Activated B cell treated with CpG ODN at 0.5 μM for 24 hours (primary cell): ENCODE measurements at regions of chr12 and their contacts with region 1.

Region 1: GRCh38 chr12:96985480-96986362 is 78.7 kb downstream of the NEDD1 start:
- DNase-seq: peak; percentile 37
- ATAC-seq: peak; percentile 87
- H3K4me3 Mint-ChIP-seq: peak overlapping the region; percentile 66
- H3K27ac Mint-ChIP-seq: no peak overlapping the region
- H3K4me1 Mint-ChIP-seq: peaks cover 6% of the 10 kb centered on the region
- H3K27me3 Mint-ChIP-seq: peaks cover 6% of the 10 kb centered on the region
- CTCF ChIP-seq: peak; percentile 93

Region 2: GRCh38 chr12:96906849-96907670 is 78.7 kb before region 1 on chr12 and contains the start of gene NEDD1:
- CTCF ChIA-PET with region 1: no interaction called
- POLR2A ChIA-PET with region 1: no interaction called
- intact Hi-C with region 1: loop called (anchors 1 kb)
- DNase-seq: peak; percentile 85
- ATAC-seq: peak; percentile 85
- H3K4me3 Mint-ChIP-seq: peak within 1 kb of the TSS; percentile 95
- H3K27ac Mint-ChIP-seq: peak within 1 kb of the TSS; percentile 91
- H3K4me1 Mint-ChIP-seq: peaks cover 41% of the 10 kb centered on the region
- H3K27me3 Mint-ChIP-seq: peaks cover 2% of the 10 kb centered on the region
- CTCF ChIP-seq: no peak
- total RNA-seq, gene NEDD1: 15.0 and 16.3 TPM in 2 replicates

Region 3: GRCh38 chr12:97308576-97309198 is 323.0 kb after region 1 on chr12:
- CTCF ChIA-PET with region 1: interaction called, 13 read pairs
- POLR2A ChIA-PET with region 1: no interaction called
- intact Hi-C with region 1: loop called (anchors 1 kb)
- DNase-seq: no peak
- ATAC-seq: peak; percentile 49
- H3K4me3 Mint-ChIP-seq: no peak overlapping the region
- H3K27ac Mint-ChIP-seq: no peak overlapping the region
- H3K4me1 Mint-ChIP-seq: peaks cover 22% of the 10 kb centered on the region
- H3K27me3 Mint-ChIP-seq: peaks cover 23% of the 10 kb centered on the region
- CTCF ChIP-seq: peak; percentile 59

Region 4: DNA sequence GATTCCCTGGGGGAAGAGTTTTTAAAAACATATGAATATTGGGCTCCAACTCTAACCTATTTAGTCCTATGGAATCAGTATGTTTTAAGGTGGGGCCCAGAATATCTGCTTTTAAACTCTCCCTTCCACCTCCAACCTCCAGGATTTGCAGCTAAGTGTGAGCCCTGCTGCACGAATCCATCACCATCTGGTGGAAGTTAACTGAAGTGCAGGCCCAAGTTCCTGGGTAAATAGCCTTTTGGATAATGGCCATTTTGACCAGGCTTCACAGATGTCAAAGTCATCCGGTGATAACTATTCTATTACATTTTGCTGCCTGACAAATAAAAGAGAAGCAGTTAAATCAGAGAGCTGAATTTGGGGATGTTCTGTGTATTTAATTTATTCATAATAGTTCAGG is 418.8 kb after region 1 on chr12:
- CTCF ChIA-PET with region 1: no interaction called
- POLR2A ChIA-PET with region 1: no interaction called
- intact Hi-C with region 1: loop called (anchors 5 kb)
- DNase-seq: no peak
- ATAC-seq: peak; percentile 50
- H3K4me3 Mint-ChIP-seq: no peak overlapping the region
- H3K27ac Mint-ChIP-seq: no peak overlapping the region
- H3K4me1 Mint-ChIP-seq: no peaks in the 10 kb centered on the region
- H3K27me3 Mint-ChIP-seq: peaks cover 3% of the 10 kb centered on the region
- CTCF ChIP-seq: no peak

Region 5: DNA sequence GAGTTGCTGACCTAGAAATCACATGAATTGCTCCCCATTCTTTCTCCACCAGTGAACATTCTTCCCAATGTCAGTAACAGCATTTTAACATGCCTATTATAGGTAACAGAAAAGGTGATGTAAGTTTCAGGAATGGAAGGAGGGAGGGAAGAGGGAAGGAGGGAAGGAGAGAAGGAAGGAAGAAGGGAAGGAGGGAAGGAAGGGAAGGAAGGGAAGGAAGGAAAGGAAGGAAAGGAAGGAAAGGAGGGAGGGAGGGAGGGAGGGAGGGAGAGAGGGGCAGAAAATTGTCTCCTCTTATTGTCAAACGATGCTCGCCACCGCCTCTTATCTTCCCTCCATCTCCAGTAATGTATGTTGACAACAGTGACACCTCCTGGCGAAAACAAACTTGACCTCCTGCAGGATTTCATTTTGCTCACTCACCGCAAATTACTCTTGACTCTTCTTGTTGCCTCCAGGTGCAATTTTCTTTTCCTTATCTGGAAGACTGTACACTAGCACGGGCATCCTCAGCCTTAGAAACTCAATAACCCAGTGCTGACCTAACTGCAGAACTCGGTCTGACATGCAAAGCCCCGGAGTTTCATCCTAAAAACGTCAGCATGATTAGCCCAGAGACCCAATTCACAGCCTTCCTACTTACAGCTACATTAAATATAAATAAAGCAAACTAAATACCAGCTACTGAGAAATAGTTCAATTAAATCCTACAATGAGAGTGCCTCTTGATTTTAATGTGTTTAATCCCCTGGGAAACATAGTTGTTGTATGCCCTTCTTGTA is 1017.2 kb after region 1 on chr12:
- CTCF ChIA-PET with region 1: no interaction called
- POLR2A ChIA-PET with region 1: no interaction called
- intact Hi-C with region 1: loop called (anchors 10 kb)
- DNase-seq: no peak
- ATAC-seq: peak; percentile 28
- H3K4me3 Mint-ChIP-seq: no peak overlapping the region
- H3K27ac Mint-ChIP-seq: no peak overlapping the region
- H3K4me1 Mint-ChIP-seq: no peaks in the 10 kb centered on the region
- H3K27me3 Mint-ChIP-seq: peaks cover 6% of the 10 kb centered on the region
- CTCF ChIP-seq: no peak